PC-9 (cell line): ENCODE measurements at regions of chr5 and their contacts with region 1.

Region 1: DNA sequence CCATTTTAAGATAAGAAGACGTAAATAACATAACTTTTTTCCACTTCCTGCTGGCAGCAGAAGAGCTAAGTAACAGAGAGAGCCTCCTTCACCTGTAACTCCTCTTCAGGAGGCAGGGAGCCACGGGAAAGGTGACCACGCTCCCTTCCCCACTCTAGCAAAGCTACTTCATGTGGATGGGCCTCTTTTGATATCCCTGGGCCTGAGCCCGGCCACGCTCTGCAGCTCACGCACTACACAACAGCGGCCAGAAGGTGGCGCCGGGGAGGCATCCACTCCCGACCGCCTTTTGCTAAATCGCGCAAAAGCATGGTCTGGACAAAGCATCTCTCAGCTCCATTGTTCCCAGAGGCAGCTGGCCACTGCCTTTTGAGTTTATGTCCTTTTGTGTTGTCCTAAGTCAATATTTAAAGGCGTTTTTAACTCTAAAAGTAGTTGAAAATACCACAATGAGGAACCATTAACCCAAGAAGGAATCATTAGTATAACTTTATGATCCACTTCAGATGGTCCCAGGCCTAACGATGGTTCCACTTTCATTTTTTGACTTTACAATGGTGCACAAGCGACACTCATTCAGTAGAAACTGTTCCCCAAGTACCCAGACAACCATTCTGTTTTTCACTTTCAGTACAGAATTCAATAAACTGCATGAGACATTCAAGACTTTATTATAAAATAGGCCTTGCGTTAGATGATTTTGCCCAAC is 23.6 kb downstream of the CMBL start:
- DNase-seq: peak; percentile 46 to 93
- H3K4me3 ChIP-seq: no peak overlapping the region
- H3K27ac ChIP-seq: no peak overlapping the region
- H3K4me1 ChIP-seq: peaks cover 14% of the 10 kb centered on the region
- H3K27me3 ChIP-seq: no peaks in the 10 kb centered on the region
- CTCF ChIP-seq: peak; percentile 96

Region 2: GRCh38 chr5:9188131-9188530 is 1096.0 kb before region 1 on chr5:
- CTCF ChIA-PET with region 1: no interaction called
- POLR2A ChIA-PET with region 1: no interaction called
- intact Hi-C with region 1: no loop called
- DNase-seq: peak in 1 of 2 experiments; percentile 40
- H3K4me3 ChIP-seq: no peak overlapping the region
- H3K27ac ChIP-seq: no peak overlapping the region
- H3K4me1 ChIP-seq: no peaks in the 10 kb centered on the region
- H3K27me3 ChIP-seq: no peaks in the 10 kb centered on the region
- CTCF ChIP-seq: no peak

Region 3: GRCh38 chr5:10249948-10250803 is 33.9 kb before region 1 on chr5 and contains the start of gene CCT5:
- CTCF ChIA-PET with region 1: interaction called, 15 read pairs
- POLR2A ChIA-PET with region 1: no interaction called
- intact Hi-C with region 1: no loop called
- DNase-seq: peak; percentile 97 to 98
- H3K4me3 ChIP-seq: peak within 1 kb of the TSS; percentile 100
- H3K27ac ChIP-seq: peak within 1 kb of the TSS; percentile 91
- H3K4me1 ChIP-seq: peaks cover 17% of the 10 kb centered on the region
- H3K27me3 ChIP-seq: no peaks in the 10 kb centered on the region
- CTCF ChIP-seq: no peak
- total RNA-seq, gene CCT5: 658 and 831 TPM in 2 replicates

Region 4: GRCh38 chr5:10307206-10308148 is 23.4 kb after region 1 on chr5 and contains the start of gene CMBL:
- CTCF ChIA-PET with region 1: interaction called, 4 read pairs
- POLR2A ChIA-PET with region 1: no interaction called
- intact Hi-C with region 1: loop called (anchors 1 kb)
- DNase-seq: peak; percentile 56 to 94
- H3K4me3 ChIP-seq: peak within 1 kb of the TSS; percentile 79
- H3K27ac ChIP-seq: peak within 1 kb of the TSS; percentile 79
- H3K4me1 ChIP-seq: peaks cover 44% of the 10 kb centered on the region
- H3K27me3 ChIP-seq: no peaks in the 10 kb centered on the region
- CTCF ChIP-seq: no peak
- total RNA-seq, gene CMBL: 286 and 294 TPM in 2 replicates

Region 5: DNA sequence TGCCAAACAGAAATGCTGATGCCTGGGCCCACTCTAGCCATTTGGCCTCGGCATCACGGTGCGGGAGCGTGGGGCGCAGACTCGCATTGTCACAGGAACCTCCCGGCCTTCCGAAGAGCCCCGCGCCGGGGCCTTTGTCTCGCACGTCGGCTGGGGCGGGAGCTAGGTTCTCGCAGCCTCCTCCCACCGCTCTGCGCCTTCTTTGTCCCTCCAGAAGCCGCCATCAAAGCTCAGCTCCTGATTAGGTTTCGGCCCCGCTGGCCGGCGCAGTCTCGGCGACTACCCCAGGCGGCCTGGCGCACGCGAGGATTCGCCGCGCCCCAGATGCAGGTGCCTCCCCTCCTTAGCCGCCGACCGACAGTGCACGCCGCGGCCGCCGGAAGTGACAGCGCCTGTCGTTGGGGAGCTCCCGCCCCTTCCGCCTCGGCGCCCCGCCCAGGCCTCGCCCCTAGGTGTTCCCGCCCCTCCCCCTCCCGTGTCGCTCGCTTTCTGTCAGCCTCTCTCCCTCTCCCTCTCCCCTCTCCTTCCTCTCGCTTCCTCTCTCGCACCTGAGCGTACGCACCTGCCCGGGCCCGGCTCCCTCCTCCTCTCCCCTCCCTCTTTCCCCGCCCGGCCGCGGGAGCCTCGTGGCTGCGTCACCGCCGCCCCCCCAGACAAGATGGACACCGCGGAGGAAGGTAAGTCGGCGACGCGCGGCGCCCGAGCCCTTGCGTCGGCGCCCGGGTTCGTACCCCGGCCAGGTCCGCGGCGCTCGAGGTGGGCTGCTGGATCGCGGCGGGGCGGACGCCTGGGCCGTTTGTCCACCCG is 69.4 kb after region 1 on chr5 and contains the start of gene MARCHF6:
- CTCF ChIA-PET with region 1: interaction called, 6 read pairs
- POLR2A ChIA-PET with region 1: interaction called, 4 read pairs
- intact Hi-C with region 1: loop called (anchors 1 kb)
- DNase-seq: peak; percentile 87 to 100
- H3K4me3 ChIP-seq: peak within 1 kb of the TSS; percentile 85
- H3K27ac ChIP-seq: peak within 1 kb of the TSS; percentile 93
- H3K4me1 ChIP-seq: peaks cover 18% of the 10 kb centered on the region
- H3K27me3 ChIP-seq: no peaks in the 10 kb centered on the region
- CTCF ChIP-seq: no peak
- total RNA-seq, gene MARCHF6: 283 and 364 TPM in 2 replicates

Region 6: GRCh38 chr5:10401498-10401897 is 117.4 kb after region 1 on chr5:
- CTCF ChIA-PET with region 1: interaction called, 4 read pairs
- POLR2A ChIA-PET with region 1: interaction called, 4 read pairs
- intact Hi-C with region 1: loop called (anchors 1 kb)
- DNase-seq: no peak
- H3K4me3 ChIP-seq: no peak overlapping the region
- H3K27ac ChIP-seq: no peak overlapping the region
- H3K4me1 ChIP-seq: no peaks in the 10 kb centered on the region
- H3K27me3 ChIP-seq: no peaks in the 10 kb centered on the region
- CTCF ChIP-seq: no peak

Region 7: GRCh38 chr5:10441083-10441991 is 157.3 kb after region 1 on chr5 and contains the start of gene ROPN1L:
- CTCF ChIA-PET with region 1: no interaction called
- POLR2A ChIA-PET with region 1: no interaction called
- intact Hi-C with region 1: loop called (anchors 1 kb)
- DNase-seq: peak; percentile 70 to 97
- H3K4me3 ChIP-seq: peak within 1 kb of the TSS; percentile 72
- H3K27ac ChIP-seq: no peak within 1 kb of the TSS
- H3K4me1 ChIP-seq: peaks cover 17% of the 10 kb centered on the region
- H3K27me3 ChIP-seq: no peaks in the 10 kb centered on the region
- CTCF ChIP-seq: no peak
- total RNA-seq, gene ROPN1L: 7.1 and 10.3 TPM in 2 replicates

Region 8: DNA sequence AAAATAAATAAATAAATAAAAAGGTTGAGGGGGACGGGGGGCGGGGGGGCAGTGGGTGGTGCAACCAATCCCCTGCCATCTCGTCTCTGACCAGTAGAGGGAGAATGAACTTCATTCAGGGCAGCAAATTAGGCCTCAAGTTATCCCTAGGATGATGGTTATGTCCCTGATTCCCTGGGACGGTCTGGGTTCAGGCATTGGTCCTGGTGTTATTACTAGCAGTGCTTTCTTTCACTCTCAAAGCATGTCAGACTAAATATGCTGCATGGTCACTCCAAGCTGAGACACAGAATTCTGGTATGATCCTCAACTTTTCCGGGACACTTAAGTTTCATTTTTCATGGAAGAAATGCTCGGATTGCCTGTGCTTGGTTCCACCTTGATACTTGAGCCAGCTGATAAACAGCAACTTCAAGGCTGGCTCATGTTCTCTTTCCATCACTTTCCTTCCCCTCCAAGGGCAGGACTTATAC is 417.5 kb after region 1 on chr5:
- CTCF ChIA-PET with region 1: no interaction called
- POLR2A ChIA-PET with region 1: no interaction called
- intact Hi-C with region 1: loop called (anchors 1 kb)
- DNase-seq: peak in 1 of 2 experiments; percentile 44
- H3K4me3 ChIP-seq: peak overlapping the region; percentile 16; the same call in 1 of the 2 replicates
- H3K27ac ChIP-seq: peak overlapping the region; percentile 96
- H3K4me1 ChIP-seq: peaks cover 63% of the 10 kb centered on the region
- H3K27me3 ChIP-seq: no peaks in the 10 kb centered on the region
- CTCF ChIP-seq: peak; percentile 81